ENCODE measurements at regions of chr3 and their contacts with region 1.

Region 1: DNA sequence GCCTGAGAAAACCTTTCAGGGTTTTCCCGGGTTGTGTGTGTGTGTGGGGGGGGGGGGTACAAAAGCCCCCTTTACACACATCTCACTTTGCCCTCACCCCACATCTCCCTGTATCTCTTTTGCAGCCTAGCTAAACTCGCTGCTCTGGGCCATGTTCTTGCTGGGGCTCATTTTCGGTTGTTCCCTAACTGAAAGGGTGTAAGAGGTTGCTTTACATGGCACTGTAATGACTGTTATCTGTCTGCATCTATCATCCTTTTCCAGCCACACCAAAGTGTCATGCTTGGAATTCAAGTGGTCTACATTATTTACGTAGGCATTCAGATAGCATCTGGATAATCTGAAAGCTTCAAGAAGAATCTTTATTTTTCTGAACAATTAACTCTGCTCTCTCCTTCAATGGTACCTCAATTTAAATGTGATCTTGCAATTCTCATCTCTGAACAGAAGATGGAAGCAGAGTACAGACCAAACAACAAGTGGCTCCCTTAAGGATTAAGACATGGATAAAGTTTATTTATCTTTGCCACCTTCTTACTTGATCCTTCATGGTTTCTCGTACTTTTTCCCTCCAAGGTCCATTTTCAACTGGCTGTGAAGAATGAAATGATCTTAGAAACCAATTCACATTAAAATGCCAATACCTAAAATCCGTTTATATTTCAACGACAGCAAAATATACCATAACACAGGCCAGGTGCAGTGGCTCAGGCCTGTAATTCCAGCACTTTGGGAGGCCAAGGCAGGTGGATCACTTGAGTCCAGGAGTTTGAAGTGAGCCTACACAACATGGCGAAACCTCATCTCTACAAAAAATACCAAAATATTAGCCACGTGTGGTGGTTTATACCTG is 34.9 kb downstream of the DCLK3 start:
- DNase-seq: no peak
- ATAC-seq: peak; percentile 67 to 88 (median 86)
- H3K4me3 ChIP-seq: no peak overlapping the region
- H3K27ac ChIP-seq: no peak overlapping the region
- H3K4me1 ChIP-seq: no peaks in the 10 kb centered on the region
- H3K27me3 ChIP-seq: no peaks in the 10 kb centered on the region
- CTCF ChIP-seq: peak in 3 of 4 donors; percentile 43 to 50 (median 45)

Region 2: DNA sequence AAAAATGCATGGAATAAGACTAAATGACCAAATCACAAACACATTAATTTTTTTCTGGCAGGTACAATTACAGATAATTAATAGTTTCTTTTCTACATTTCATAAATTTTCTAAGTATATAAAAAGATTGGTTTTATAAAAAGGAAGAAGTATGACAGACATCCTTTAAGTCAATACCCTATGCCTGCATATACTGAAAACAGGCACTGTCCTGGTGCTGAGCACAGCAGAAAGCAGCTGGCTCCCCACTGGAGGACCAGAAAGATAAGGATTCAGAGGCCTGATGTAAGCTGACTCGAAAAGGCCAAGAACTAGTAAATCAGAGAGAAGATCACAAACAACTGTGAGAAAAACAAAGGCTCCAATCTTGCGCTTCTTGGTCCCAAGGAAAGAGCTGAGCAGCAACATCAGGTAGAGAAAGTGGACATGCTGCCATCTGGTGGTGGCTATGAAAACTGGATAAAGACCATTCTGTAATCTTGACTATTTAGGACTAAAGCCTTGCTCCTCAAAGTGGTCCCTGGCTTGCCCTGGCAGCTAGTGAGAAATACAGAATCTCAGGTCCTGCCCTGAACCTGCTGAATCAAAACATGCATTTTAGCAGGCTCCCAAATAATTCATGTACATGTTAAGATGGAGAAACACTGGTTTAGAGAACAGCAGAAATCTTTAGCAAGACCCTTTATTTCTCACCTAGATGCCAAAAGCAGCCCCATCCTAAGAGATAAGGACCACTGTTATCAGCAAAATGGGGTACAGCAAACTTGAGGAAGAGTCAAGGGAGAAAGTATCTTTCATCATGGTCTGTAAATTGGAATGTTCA is 139.4 kb after region 1 on chr3:
- intact Hi-C with region 1: loop called in 1 of 3 experiments (anchors 10 kb)
- DNase-seq: peak in 3 of 6 donors; percentile 11 to 50 (median 28)
- ATAC-seq: peak in 3 of 4 donors; percentile 86 to 88 (median 87)
- H3K4me3 ChIP-seq: no peak overlapping the region
- H3K27ac ChIP-seq: no peak overlapping the region
- H3K4me1 ChIP-seq: no peaks in the 10 kb centered on the region
- H3K27me3 ChIP-seq: no peaks in the 10 kb centered on the region
- CTCF ChIP-seq: peak; percentile 33 to 72 (median 58)

Region 3: GRCh38 chr3:36881735-36882134 is 152.3 kb after region 1 on chr3:
- intact Hi-C with region 1: no loop called
- DNase-seq: no peak
- ATAC-seq: no peak
- H3K4me3 ChIP-seq: no peak overlapping the region
- H3K27ac ChIP-seq: no peak overlapping the region
- H3K4me1 ChIP-seq: no peaks in the 10 kb centered on the region
- H3K27me3 ChIP-seq: no peaks in the 10 kb centered on the region
- CTCF ChIP-seq: no peak

Region 4: GRCh38 chr3:36957862-36958686 is 228.6 kb after region 1 on chr3:
- intact Hi-C with region 1: loop called in 2 of 3 experiments (anchors 5 to 10 kb)
- DNase-seq: no peak
- ATAC-seq: peak in 2 of 4 donors; percentile 13 to 16
- H3K4me3 ChIP-seq: no peak overlapping the region
- H3K27ac ChIP-seq: no peak overlapping the region
- H3K4me1 ChIP-seq: no peaks in the 10 kb centered on the region
- H3K27me3 ChIP-seq: no peaks in the 10 kb centered on the region
- CTCF ChIP-seq: no peak